Sciatic nerve (tissue), 2 donors: ENCODE measurements at regions of chr17 and their contacts with region 1.

Region 1: DNA sequence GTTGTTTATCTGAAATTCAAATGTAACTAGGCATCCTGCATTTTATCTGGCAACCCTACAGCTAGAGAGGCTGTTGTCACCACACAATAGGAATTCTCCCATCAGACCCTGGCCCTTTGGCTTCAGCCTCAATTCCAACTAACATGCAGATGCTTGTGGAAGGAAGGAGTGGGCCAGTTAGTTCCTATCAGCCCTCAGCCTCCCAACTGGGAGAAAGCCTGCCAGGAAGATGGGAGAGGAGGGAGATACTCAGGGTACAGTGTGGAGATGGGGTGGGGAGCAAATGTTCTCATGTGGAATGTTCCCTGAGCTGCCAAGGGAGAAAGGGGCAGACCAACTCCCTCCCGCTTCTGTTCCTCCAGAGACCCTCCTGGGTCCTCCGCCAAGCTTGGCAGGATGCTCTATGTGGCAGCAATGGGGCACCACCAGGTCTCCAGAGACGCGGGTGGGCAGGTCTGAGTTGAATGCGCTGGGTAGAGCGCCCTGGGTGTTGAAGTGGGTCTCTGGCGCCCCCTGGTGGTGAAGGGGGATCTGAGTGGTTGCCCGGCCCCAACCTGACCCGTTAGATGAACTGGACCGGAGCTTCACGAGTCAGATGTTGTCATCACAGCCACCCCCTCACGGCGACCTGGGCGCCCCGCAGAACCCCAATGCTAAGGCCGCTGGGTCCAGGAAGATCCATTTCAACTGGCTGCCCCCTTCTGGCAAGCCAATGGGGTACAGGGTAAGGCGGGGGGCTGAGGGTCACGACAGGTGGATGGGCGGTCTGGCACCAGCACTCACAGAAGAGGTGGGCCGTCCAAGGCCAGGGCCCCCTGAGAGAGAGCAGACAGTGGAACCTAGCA is 15.2 kb downstream of the GALK1 start:
- DNase-seq: peak; percentile 94
- ATAC-seq: peak; percentile 81

Region 2: DNA sequence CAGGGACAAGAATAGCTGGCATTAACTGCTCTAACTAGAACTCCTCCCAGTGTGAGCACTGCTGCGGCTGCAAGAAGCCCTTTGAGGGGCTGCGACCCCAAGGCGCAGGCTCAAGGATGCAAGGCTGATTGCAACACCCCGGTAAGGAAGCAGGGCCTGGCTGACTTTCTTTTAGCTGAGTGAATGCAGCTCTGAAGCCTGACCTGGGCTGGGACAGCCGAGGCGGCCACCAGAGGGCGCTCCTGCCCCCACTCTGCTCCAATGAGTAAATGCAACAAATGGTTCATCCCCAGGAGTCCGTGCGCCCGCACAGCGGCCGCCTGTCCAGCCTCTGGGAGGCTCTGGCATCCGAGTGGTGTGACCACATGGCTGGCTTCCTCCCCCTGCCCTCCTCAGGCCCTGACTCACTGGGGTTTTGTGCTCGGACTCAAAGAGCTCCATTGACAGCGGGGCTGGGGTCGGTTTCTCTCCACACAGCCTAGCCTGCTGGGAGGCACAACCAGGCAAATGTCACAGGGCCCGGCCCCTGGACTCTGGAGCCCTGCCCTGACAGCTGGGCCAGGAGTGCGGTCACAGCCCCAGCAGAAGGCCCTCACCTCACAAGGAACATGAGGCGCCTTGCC is 116.8 kb before region 1 on chr17 and contains the start of gene SMIM5:
- intact Hi-C with region 1: loop called (anchors 5 kb)
- DNase-seq: peak; percentile 94
- ATAC-seq: peak; percentile 88
- total RNA-seq, gene SMIM5: 12.5 TPM

Region 3: DNA sequence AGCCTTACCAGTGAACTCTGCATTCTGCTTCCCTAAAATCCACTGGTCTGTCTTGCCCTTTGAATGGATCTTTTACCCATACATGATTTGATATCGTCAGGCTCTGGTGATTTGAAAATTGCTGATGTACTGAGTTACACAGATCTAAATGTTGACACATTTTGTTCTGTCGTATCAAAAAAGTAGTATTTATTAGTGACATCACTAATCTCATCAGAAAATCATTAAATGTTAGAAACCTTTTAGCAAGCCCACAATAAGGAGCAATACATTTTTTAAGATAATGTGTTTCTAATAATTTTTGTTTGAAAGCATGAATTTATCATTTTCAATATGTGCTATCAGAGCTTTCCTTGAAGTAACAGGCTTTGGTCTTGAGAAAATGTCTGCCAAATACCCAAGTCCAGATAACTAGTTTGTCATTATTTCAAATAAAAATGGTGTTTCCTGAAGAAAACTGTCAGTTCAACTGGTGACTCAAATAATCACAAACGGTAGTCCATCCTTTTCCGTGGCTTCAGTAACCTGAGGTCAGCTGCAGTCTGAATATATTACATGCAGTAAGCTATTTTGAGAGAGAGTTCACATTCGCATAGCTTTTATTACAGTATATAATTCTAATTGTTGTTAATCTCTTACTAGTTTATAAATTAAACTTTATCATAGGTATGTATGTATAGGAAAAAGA is 73.5 kb before region 1 on chr17:
- intact Hi-C with region 1: loop called (anchors 2 kb)
- DNase-seq: no peak
- ATAC-seq: no peak

Region 4: GRCh38 chr17:76862494-76862893 is 1112.7 kb after region 1 on chr17:
- intact Hi-C with region 1: no loop called
- DNase-seq: no peak
- ATAC-seq: no peak